ENCODE measurements at regions of chr14 and their contacts with region 1.

Region 1: GRCh38 chr14:49659526-49660455 is 24.7 kb upstream of the DNAAF2 start:
- DNase-seq: peak in 1 of 2 experiments; percentile 80
- H3K4me3 ChIP-seq: no peak overlapping the region
- H3K27ac ChIP-seq: peak overlapping the region; percentile 71
- H3K4me1 ChIP-seq: peaks cover 39% of the 10 kb centered on the region
- H3K27me3 ChIP-seq: no peaks in the 10 kb centered on the region
- CTCF ChIP-seq: no peak

Region 2: DNA sequence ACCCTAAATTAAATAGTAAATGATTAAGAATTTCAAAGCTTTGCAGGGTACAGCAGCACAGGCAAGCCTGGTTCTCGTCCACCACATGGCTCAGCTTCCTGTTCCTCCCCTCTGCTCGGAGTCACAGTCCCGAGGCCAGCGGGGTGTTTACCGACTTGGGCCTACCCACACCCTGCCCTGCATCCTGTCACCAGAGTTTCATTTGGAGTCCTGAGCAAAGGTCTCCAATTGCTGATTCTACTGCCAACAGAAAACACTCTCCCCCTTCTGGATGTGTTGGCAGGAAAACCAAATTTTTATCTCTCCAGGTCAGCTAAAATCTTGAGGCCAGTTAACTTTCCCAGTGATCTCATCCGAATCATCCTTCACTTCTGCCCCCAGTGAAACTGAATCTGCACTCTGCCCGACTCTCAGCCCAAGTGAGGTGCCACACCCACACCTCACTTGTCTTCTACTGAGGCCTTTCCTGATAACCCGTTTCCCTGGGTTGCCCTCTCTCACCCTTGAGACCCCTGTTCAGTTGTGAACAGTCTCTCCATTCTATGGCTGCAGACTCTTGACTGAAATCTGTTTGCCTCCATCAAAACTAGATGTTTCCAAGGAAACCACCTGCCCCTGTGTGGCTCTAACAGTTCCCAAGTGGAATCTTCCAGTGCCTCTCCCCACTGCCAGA is 385.4 kb after region 1 on chr14:
- CTCF ChIA-PET with region 1: interaction called, 11 read pairs
- POLR2A ChIA-PET with region 1: no interaction called
- intact Hi-C with region 1: no loop called
- DNase-seq: peak; percentile 63 to 89
- H3K4me3 ChIP-seq: no peak overlapping the region
- H3K27ac ChIP-seq: peak overlapping the region; percentile 99
- H3K4me1 ChIP-seq: peaks cover 81% of the 10 kb centered on the region
- H3K27me3 ChIP-seq: no peaks in the 10 kb centered on the region
- CTCF ChIP-seq: no peak

Measured in PC-9 (cell line).